ENCODE measurements at regions of chr10 and their contacts with region 1.

Region 1: GRCh38 chr10:58299580-58299979 is 30.6 kb downstream of the CISD1 start:
- DNase-seq: peak; percentile 65
- ATAC-seq: peak; percentile 68
- H3K4me3 Mint-ChIP-seq: no peak overlapping the region
- H3K27ac Mint-ChIP-seq: no peak overlapping the region
- H3K4me1 Mint-ChIP-seq: no peaks in the 10 kb centered on the region
- H3K27me3 Mint-ChIP-seq: peaks cover 12% of the 10 kb centered on the region

Region 2: GRCh38 chr10:58143944-58144343 is 155.6 kb before region 1 on chr10:
- CTCF ChIA-PET with region 1: no interaction called
- POLR2A ChIA-PET with region 1: no interaction called
- DNase-seq: peak; percentile 22
- ATAC-seq: no peak
- H3K4me3 Mint-ChIP-seq: no peak overlapping the region
- H3K27ac Mint-ChIP-seq: no peak overlapping the region
- H3K4me1 Mint-ChIP-seq: peaks cover 11% of the 10 kb centered on the region
- H3K27me3 Mint-ChIP-seq: peaks cover 5% of the 10 kb centered on the region

Region 3: DNA sequence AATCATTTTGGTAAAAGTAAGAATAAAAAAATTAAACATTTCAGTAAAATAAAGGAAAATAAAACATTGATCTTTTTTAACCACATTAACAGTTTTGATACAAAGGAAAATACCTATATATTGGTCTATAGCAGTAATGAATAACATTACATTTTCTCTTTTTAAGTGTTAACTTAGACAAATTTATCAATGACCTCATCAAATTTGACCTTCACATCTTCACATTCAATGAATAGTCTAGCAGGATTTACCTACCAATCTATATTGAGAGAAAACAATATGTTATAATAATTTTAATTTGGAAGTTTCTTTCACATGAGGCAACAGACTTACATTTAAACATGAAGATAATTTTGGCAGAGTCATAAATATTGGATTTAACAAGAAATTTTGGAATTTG is 17.3 kb after region 1 on chr10:
- CTCF ChIA-PET with region 1: interaction called, 13 read pairs
- POLR2A ChIA-PET with region 1: no interaction called
- DNase-seq: no peak
- ATAC-seq: no peak
- H3K4me3 Mint-ChIP-seq: no peak overlapping the region
- H3K27ac Mint-ChIP-seq: no peak overlapping the region
- H3K4me1 Mint-ChIP-seq: no peaks in the 10 kb centered on the region
- H3K27me3 Mint-ChIP-seq: peaks cover 12% of the 10 kb centered on the region

Region 4: DNA sequence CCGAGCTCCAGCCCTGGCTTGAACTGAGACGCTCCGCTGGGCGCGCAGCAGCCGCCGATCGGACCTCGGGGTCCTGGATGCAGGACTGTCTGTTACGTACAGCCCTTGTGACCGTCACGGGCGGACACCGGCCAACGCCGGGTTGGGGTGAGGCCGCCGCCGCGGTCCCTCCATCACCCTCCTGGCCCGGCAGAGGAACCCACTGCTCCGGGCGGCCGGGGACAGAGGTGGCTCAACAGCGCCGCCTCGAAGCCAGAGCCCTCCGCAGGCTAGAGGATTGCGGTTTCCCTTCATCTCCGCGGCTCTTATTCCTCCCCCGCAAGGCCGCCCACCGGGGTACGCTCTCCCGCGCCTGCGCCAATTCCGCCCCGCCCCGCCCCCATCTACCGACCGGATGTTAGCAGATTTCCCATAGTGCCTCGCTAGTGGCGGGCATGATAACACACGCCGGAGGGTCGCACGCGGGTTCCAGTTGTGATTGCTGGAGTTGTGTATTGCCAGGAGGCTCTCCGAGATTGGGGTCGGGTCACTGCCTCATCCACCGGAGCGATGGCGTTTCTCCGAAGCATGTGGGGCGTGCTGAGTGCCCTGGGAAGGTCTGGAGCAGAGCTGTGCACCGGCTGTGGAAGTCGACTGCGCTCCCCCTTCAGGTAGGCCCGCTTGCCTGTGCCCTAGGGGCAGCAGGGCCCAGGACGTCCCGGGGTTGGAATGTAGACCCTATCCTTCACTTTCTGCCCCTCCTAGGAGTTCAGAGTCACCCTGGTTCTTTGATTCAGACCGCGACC is 85.6 kb after region 1 on chr10 and contains the start of gene TFAM:
- CTCF ChIA-PET with region 1: interaction called, 41 read pairs
- POLR2A ChIA-PET with region 1: no interaction called
- DNase-seq: peak; percentile 97
- ATAC-seq: peak; percentile 92
- H3K4me3 Mint-ChIP-seq: peak within 1 kb of the TSS; percentile 98
- H3K27ac Mint-ChIP-seq: peak within 1 kb of the TSS; percentile 97
- H3K4me1 Mint-ChIP-seq: peaks cover 34% of the 10 kb centered on the region
- H3K27me3 Mint-ChIP-seq: peaks cover 4% of the 10 kb centered on the region
- total RNA-seq, gene TFAM: 64.1 to 67.2 TPM

Measured in activated CD8-positive, alpha-beta T cell treated with anti-CD3 and anti-CD28 coated beads, Interleukin-2, amount 10 ng/mL, durations not matched to agents 7 days and 5 days (primary cell).